Heart right ventricle (tissue), 16 donors: ENCODE measurements at regions of chr2 and their contacts with region 1.

Region 1: DNA sequence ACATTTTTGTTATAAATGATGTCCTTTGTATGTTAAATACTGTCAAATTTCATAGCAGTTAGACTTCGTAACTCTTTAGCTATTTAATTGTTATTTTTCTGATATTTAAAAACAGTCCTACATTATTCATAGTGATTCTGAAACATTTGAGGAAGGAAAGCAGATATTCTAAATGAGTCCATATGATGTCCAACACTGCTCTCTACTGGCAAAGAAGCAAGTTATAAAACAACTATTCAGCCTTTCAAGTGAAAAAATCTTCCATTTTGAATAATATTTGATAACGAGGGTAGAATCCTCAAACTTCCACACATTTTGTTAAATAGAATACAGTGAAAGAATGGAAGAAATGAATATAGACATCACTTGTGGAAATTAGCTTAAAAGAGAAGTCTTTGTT is 220.8 kb downstream of the GULP1 start:
- DNase-seq: no peak
- ATAC-seq: peak in 1 of 8 donors; percentile 47
- H3K4me3 ChIP-seq: no peak overlapping the region
- H3K27ac ChIP-seq: no peak overlapping the region
- H3K4me1 ChIP-seq: no peaks in the 10 kb centered on the region
- H3K27me3 ChIP-seq: no peaks in the 10 kb centered on the region
- CTCF ChIP-seq: peak in 7 of 9 donors; percentile 41 to 70 (median 62)

Region 2: GRCh38 chr2:187842978-187843847 is 669.2 kb before region 1 on chr2:
- intact Hi-C with region 1: loop called in 1 of 10 experiments (anchors 10 kb)
- DNase-seq: no peak
- ATAC-seq: no peak
- H3K4me3 ChIP-seq: no peak overlapping the region
- H3K27ac ChIP-seq: no peak overlapping the region
- H3K4me1 ChIP-seq: no peaks in the 10 kb centered on the region
- H3K27me3 ChIP-seq: no peaks in the 10 kb centered on the region
- CTCF ChIP-seq: peak; percentile 22 to 65 (median 50)

Region 3: DNA sequence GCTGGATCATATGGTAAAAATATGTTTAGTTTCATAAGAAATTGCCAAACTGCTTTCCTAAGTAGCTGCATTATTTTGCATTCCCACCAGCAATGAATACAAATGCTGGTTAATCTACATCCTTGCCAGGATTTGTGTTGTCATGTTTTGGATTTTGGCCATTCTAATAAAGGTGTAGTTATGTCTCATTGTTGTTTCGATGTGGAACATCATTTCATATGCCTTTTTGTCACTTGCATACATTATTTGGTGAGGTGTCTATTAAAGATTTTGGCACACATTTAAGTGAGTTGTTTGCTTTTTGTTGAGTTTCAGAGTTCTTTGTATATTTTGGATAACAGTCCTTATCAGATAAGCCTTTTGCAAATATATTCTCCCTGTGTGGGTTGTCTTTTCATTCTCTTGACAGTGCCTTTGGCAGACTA is 659.1 kb before region 1 on chr2:
- intact Hi-C with region 1: loop called in 2 of 10 experiments (anchors 5 to 10 kb)
- DNase-seq: no peak
- ATAC-seq: no peak
- H3K4me3 ChIP-seq: no peak overlapping the region
- H3K27ac ChIP-seq: no peak overlapping the region
- H3K4me1 ChIP-seq: no peaks in the 10 kb centered on the region
- H3K27me3 ChIP-seq: no peaks in the 10 kb centered on the region
- CTCF ChIP-seq: no peak